GM13976 (cell line): ENCODE measurements at regions of chr6 and their contacts with region 1.

Region 1: GRCh38 chr6:156780102-156780641 is 3.0 kb downstream of the ARID1B start:
- DNase-seq: peak; percentile 73
- CTCF ChIP-seq: no peak

Region 2: GRCh38 chr6:156449128-156449527 is 331.0 kb before region 1 on chr6:
- in situ Hi-C with region 1: no loop called
- DNase-seq: no peak
- CTCF ChIP-seq: no peak

Region 3: DNA sequence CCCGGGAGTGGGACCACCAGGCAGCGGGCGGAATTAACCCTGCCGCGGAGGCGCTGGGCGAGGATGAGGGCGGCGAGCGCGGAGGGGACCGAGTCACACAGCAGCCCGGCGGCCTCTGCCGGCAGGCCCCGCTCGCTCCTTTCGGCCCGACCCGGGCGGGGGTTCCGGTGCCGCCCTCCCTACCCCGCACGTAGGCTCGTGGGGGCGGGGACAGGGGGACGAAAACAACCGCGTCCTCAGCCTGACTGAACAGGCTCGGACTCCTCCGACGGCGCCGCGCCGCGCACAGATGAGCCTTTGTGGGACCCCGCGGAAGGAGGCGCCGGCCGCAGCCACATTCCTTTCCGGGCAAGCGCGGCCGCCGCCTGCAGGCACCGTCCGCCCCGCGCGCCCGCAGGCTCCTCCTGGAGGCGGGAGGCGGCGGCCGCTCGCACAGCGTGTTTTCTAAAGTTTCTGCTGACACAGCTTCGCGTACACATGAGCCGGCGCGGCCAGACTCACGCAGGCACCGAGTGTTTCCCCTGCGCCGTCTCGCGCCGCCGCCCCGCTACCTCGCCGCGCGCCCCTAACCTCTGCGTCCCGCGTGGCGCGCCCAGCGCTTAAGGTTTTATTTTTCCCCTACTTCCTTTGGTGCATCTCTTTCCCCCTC is 241.3 kb after region 1 on chr6:
- in situ Hi-C with region 1: loop called (anchors 10 kb)
- DNase-seq: peak; percentile 90
- CTCF ChIP-seq: peak; percentile 31

Region 4: GRCh38 chr6:157741948-157742556 is 961.9 kb after region 1 on chr6:
- in situ Hi-C with region 1: no loop called
- DNase-seq: no peak
- CTCF ChIP-seq: no peak